CD4-positive, alpha-beta T cell (primary cell): ENCODE measurements at regions of chr10 and their contacts with region 1.

Region 1: DNA sequence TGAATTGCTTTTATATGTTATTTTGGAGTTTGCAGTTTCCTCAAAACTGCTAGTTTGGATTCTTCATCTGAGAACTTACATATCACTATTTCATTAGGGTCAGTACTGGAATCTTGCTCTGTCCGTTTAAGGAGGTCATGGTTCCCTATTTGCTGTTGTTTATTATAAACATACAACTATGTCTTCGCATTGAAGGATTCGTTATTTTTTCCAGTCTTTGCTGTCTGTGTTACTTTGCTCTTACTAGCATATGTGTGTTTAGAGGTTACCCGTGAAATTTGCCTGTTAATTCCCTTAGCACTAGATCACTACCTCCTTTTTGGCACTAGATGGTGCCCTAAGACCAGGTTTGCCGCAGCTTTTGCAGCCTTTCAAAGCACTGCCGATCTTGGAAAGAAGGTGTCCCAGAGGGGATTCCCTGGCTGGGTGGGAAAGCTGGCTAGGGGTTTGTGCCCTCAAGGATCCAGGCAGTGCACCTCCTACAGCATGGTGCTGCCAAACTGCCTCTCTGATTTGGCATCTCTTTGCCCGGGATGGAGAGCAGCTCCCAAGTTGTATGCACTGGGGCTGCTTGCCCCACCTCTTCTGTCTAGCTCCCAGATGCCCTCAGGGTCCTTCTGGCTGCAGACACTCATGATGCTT is 103.1 kb upstream of the APBB1IP start:
- DNase-seq: peak; percentile 43 to 85 (median 55)
- ATAC-seq: peak; percentile 91
- H3K4me3 ChIP-seq: peak overlapping the region; percentile 51
- H3K4me3 Mint-ChIP-seq: peak overlapping the region; percentile 72
- H3K27ac ChIP-seq: no peak overlapping the region
- H3K27ac Mint-ChIP-seq: no peak overlapping the region
- H3K4me1 ChIP-seq: peaks cover 5% of the 10 kb centered on the region
- H3K4me1 Mint-ChIP-seq: no peaks in the 10 kb centered on the region
- H3K27me3 ChIP-seq: no peaks in the 10 kb centered on the region
- H3K27me3 Mint-ChIP-seq: no peaks in the 10 kb centered on the region
- CTCF ChIP-seq: peak; percentile 86

Region 2: DNA sequence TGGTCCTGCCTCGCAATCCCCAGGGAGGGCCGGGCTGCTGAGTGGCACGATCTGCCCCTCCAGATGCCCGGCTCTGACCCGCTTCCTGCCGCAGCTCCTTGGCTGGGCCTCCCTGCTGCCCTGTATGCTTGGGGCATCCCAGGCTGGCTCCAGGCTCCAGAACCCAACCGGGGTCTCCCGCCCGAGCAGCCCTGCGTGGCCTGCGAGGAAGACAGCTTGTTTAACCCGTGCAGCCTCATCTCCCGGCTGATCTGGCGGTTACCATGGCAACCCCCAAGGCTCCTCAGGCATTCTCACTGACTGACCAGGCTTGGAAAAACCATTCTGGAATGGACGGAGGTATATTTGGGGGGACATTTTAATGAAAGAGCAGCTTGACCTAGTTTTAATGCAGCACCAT is 633.4 kb before region 1 on chr10:
- CTCF ChIA-PET with region 1: no interaction called
- POLR2A ChIA-PET with region 1: no interaction called
- intact Hi-C with region 1: no loop called
- DNase-seq: no peak
- ATAC-seq: no peak
- H3K4me3 ChIP-seq: no peak overlapping the region
- H3K4me3 Mint-ChIP-seq: no peak overlapping the region
- H3K27ac ChIP-seq: no peak overlapping the region
- H3K27ac Mint-ChIP-seq: no peak overlapping the region
- H3K4me1 ChIP-seq: no peaks in the 10 kb centered on the region
- H3K4me1 Mint-ChIP-seq: no peaks in the 10 kb centered on the region
- H3K27me3 ChIP-seq: no peaks in the 10 kb centered on the region
- H3K27me3 Mint-ChIP-seq: no peaks in the 10 kb centered on the region
- CTCF ChIP-seq: no peak

Region 3: DNA sequence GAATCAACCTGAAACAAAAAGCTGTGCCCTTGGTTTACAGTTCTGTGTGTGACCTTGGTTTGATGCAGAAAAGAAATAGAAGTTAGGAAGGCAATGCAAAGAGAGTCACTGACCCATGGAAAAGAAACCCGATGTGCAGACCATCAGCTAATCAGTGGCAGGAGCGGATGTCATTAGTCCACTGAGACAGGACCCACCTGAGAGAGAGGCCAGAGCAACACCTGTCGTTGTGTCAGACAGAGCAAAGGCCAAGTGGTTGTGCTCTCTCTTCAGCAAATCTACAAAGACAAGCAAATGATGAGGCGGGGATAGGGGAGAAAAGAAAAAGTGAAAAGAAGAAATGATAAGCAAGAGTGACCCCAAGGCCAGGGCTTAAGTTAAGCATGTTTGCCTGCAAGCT is 109.7 kb before region 1 on chr10:
- CTCF ChIA-PET with region 1: no interaction called
- POLR2A ChIA-PET with region 1: no interaction called
- intact Hi-C with region 1: no loop called
- DNase-seq: no peak
- ATAC-seq: no peak
- H3K4me3 ChIP-seq: no peak overlapping the region
- H3K4me3 Mint-ChIP-seq: no peak overlapping the region
- H3K27ac ChIP-seq: no peak overlapping the region
- H3K27ac Mint-ChIP-seq: no peak overlapping the region
- H3K4me1 ChIP-seq: no peaks in the 10 kb centered on the region
- H3K4me1 Mint-ChIP-seq: no peaks in the 10 kb centered on the region
- H3K27me3 ChIP-seq: peaks cover 19 to 34% of the 10 kb centered on the region in 2 experiments
- H3K27me3 Mint-ChIP-seq: peaks cover 81% of the 10 kb centered on the region
- CTCF ChIP-seq: no peak

Region 4: GRCh38 chr10:26437637-26438461 is 102.8 kb after region 1 on chr10 and contains the start of gene APBB1IP:
- CTCF ChIA-PET with region 1: no interaction called
- POLR2A ChIA-PET with region 1: interaction called, 10 read pairs
- intact Hi-C with region 1: no loop called
- DNase-seq: peak; percentile 19 to 81 (median 37)
- ATAC-seq: peak; percentile 47
- H3K4me3 ChIP-seq: peak within 1 kb of the TSS; percentile 91
- H3K4me3 Mint-ChIP-seq: peak within 1 kb of the TSS; percentile 98
- H3K27ac ChIP-seq: peak within 1 kb of the TSS; percentile 69 to 91
- H3K27ac Mint-ChIP-seq: peak within 1 kb of the TSS; percentile 97
- H3K4me1 ChIP-seq: peaks cover 38% of the 10 kb centered on the region
- H3K4me1 Mint-ChIP-seq: peaks cover 61% of the 10 kb centered on the region
- H3K27me3 ChIP-seq: no peaks in the 10 kb centered on the region
- H3K27me3 Mint-ChIP-seq: no peaks in the 10 kb centered on the region
- CTCF ChIP-seq: no peak
- total RNA-seq, gene APBB1IP: 44.5 to 45.6 TPM

Region 5: GRCh38 chr10:26556748-26557640 is 221.9 kb after region 1 on chr10:
- CTCF ChIA-PET with region 1: interaction called, 8 read pairs
- POLR2A ChIA-PET with region 1: interaction called, 3 read pairs
- intact Hi-C with region 1: loop called (anchors 1 kb)
- DNase-seq: peak in 12 of 14 experiments; percentile 10 to 72 (median 20)
- ATAC-seq: peak; percentile 78
- H3K4me3 ChIP-seq: no peak overlapping the region
- H3K4me3 Mint-ChIP-seq: no peak overlapping the region
- H3K27ac ChIP-seq: no peak overlapping the region
- H3K27ac Mint-ChIP-seq: peak overlapping the region; percentile 80
- H3K4me1 ChIP-seq: no peaks in the 10 kb centered on the region
- H3K4me1 Mint-ChIP-seq: peaks cover 31% of the 10 kb centered on the region
- H3K27me3 ChIP-seq: no peaks in the 10 kb centered on the region
- H3K27me3 Mint-ChIP-seq: no peaks in the 10 kb centered on the region
- CTCF ChIP-seq: peak; percentile 80

Region 6: GRCh38 chr10:26725837-26726727 is 391.0 kb after region 1 on chr10:
- CTCF ChIA-PET with region 1: no interaction called
- POLR2A ChIA-PET with region 1: no interaction called
- intact Hi-C with region 1: loop called (anchors 1 to 2 kb)
- DNase-seq: peak; percentile 16 to 79 (median 38)
- ATAC-seq: peak; percentile 59
- H3K4me3 ChIP-seq: no peak overlapping the region
- H3K4me3 Mint-ChIP-seq: no peak overlapping the region
- H3K27ac ChIP-seq: no peak overlapping the region
- H3K27ac Mint-ChIP-seq: no peak overlapping the region
- H3K4me1 ChIP-seq: peaks cover 7% of the 10 kb centered on the region
- H3K4me1 Mint-ChIP-seq: peaks cover 9% of the 10 kb centered on the region
- H3K27me3 ChIP-seq: no peaks in the 10 kb centered on the region
- H3K27me3 Mint-ChIP-seq: no peaks in the 10 kb centered on the region
- CTCF ChIP-seq: peak; percentile 93

Region 7: GRCh38 chr10:27285108-27285507 is 950.1 kb after region 1 on chr10:
- CTCF ChIA-PET with region 1: no interaction called
- POLR2A ChIA-PET with region 1: no interaction called
- intact Hi-C with region 1: loop called in 1 of 2 experiments (anchors 10 kb)
- DNase-seq: peak in 8 of 14 experiments; percentile 3 to 69 (median 36)
- ATAC-seq: peak; percentile 78
- H3K4me3 ChIP-seq: no peak overlapping the region
- H3K4me3 Mint-ChIP-seq: no peak overlapping the region
- H3K27ac ChIP-seq: no peak overlapping the region
- H3K27ac Mint-ChIP-seq: no peak overlapping the region
- H3K4me1 ChIP-seq: no peaks in the 10 kb centered on the region
- H3K4me1 Mint-ChIP-seq: no peaks in the 10 kb centered on the region
- H3K27me3 ChIP-seq: no peaks in the 10 kb centered on the region
- H3K27me3 Mint-ChIP-seq: peaks cover 4% of the 10 kb centered on the region
- CTCF ChIP-seq: peak; percentile 57